ENCODE measurements at regions of chr7 and their contacts with region 1.

Region 1: GRCh38 chr7:143214789-143215679 is 6.8 kb upstream of the TAS2R40 start:
- DNase-seq: peak; percentile 50 to 63
- H3K4me3 ChIP-seq: no peak overlapping the region
- H3K27ac ChIP-seq: no peak overlapping the region
- H3K4me1 ChIP-seq: no peaks in the 10 kb centered on the region
- H3K27me3 ChIP-seq: no peaks in the 10 kb centered on the region
- CTCF ChIP-seq: peak; percentile 95 to 100 (median 99)
- POLR2A ChIP-seq: no peak

Region 2: DNA sequence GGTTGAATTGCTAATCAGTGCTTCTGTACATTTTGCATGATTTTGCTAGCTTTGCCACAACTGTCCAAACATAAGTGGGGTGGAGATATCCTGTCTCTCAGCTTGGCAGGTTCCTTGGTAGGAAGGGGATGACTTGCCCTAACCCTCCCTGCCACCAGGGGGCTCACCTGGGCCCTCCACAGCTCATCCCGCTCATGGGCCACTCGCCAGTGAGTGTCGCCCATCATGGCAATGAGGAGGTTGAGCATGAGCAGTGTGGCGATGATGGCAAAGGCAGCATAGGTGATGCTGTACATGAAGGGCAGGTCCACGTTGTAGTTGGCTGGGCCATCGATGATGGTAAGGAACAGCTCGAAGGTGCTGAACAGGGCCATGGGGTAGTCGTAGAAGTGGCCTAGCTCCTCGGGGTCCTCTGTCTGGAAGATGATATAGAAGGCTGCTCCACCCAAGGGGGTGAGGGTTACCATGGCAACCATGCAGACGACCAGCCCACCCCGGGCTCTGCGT is 341.7 kb before region 1 on chr7:
- intact Hi-C with region 1: loop called (anchors 10 kb)
- DNase-seq: peak; percentile 28 to 39
- H3K4me3 ChIP-seq: no peak overlapping the region
- H3K27ac ChIP-seq: no peak overlapping the region
- H3K4me1 ChIP-seq: no peaks in the 10 kb centered on the region
- H3K27me3 ChIP-seq: no peaks in the 10 kb centered on the region
- CTCF ChIP-seq: peak in 4 of 6 experiments; percentile 27 to 53 (median 34)
- POLR2A ChIP-seq: no peak

Region 3: GRCh38 chr7:143269251-143269650 is 54.2 kb after region 1 on chr7:
- intact Hi-C with region 1: no loop called
- DNase-seq: no peak
- H3K4me3 ChIP-seq: no peak overlapping the region
- H3K27ac ChIP-seq: no peak overlapping the region
- H3K4me1 ChIP-seq: peaks cover 5 to 12% of the 10 kb centered on the region in 2 donors
- H3K27me3 ChIP-seq: no peaks in the 10 kb centered on the region
- CTCF ChIP-seq: no peak
- POLR2A ChIP-seq: no peak

Region 4: GRCh38 chr7:143305423-143306070 is 90.5 kb after region 1 on chr7:
- intact Hi-C with region 1: no loop called
- DNase-seq: peak; percentile 51 to 63
- H3K4me3 ChIP-seq: no peak overlapping the region
- H3K27ac ChIP-seq: no peak overlapping the region
- H3K4me1 ChIP-seq: no peaks in the 10 kb centered on the region
- H3K27me3 ChIP-seq: no peaks in the 10 kb centered on the region
- CTCF ChIP-seq: peak in 5 of 6 experiments; percentile 27 to 65 (median 51)
- POLR2A ChIP-seq: no peak

Measured in thyroid gland (tissue), 4 donors.